Calu3 (cell line): ENCODE measurements at regions of chr2 and their contacts with region 1.

Region 1: DNA sequence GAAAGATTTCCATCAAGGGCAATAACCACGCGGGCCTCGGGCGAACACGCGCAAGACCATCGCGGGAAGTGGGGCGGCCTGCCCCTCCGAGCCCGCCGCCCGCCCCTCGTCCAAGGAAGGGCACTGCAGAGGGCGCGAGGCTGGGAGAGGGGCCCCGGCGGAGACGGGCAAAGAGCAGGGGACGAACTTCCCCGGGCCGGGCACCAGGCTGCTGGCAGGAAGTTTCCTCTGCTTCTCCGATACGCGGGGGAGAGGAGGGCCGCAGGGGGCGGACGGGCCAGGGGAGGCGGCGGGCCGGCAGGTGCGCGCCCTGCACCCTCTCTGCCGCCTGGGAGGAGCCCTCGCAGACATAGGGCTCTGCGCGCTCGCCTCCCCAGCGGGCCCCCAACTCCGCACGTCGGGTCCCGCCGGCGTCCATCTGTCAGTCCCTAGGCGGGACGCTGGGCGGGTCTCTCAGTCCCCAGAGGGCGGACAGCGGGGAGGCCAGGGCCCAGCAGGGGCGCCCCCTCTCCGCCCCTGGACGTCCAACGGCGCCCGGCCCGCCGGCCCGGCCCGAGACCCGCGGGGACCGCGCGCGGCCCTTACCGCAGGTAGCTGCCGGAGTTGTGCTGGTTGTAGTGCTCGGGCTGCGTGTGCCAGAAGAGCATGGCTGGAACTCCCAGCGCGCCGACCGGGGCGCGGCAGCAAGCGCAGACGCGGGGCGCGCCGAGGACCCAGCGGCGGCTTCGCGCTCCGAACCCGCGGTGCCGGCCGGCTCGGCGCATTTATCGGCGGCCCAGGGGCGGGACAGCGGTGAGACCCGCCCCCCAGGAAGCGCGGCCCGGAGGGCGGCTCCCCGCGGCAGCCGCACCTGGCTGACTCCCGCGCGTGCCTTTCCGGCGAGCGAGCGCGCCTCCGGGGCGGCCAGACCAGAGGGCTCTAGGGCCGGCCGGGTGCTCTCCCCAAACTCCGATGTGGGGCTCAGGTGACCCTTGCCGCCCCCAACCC is at the start of gene TFCP2L1:
- DNase-seq: peak; percentile 86
- H3K4me3 Mint-ChIP-seq: peak within 1 kb of the TSS; percentile 88
- H3K27ac Mint-ChIP-seq: peak within 1 kb of the TSS; percentile 77
- H3K4me1 Mint-ChIP-seq: peaks cover 37% of the 10 kb centered on the region
- H3K27me3 Mint-ChIP-seq: no peaks in the 10 kb centered on the region
- CTCF ChIP-seq: no peak
- total RNA-seq, gene TFCP2L1: 21.1 and 29.8 TPM in 2 replicates

Region 2: DNA sequence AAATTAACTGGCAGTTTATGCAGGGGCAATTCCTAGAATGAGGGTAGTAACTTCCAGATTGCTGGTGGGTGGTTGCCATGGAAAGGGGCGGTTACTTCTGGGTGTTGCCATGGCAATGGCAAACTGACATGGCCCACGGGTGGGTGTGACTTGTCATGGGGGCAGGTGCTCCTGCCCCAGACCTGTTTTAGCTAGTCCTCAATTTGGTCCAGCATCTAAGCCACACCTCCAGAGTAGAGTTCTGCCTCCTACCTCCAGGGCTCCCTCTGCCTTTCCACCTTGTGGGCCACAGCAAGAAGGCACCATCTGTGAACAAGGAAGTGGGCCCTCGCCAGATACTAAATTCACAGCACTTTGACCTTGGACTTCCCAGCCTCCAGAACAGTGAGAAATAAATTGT is 148.4 kb before region 1 on chr2:
- CTCF ChIA-PET with region 1: no interaction called
- intact Hi-C with region 1: loop called (anchors 10 kb)
- DNase-seq: peak; percentile 29
- H3K4me3 Mint-ChIP-seq: no peak overlapping the region
- H3K27ac Mint-ChIP-seq: no peak overlapping the region
- H3K4me1 Mint-ChIP-seq: peaks cover 19% of the 10 kb centered on the region
- H3K27me3 Mint-ChIP-seq: no peaks in the 10 kb centered on the region
- CTCF ChIP-seq: no peak

Region 3: DNA sequence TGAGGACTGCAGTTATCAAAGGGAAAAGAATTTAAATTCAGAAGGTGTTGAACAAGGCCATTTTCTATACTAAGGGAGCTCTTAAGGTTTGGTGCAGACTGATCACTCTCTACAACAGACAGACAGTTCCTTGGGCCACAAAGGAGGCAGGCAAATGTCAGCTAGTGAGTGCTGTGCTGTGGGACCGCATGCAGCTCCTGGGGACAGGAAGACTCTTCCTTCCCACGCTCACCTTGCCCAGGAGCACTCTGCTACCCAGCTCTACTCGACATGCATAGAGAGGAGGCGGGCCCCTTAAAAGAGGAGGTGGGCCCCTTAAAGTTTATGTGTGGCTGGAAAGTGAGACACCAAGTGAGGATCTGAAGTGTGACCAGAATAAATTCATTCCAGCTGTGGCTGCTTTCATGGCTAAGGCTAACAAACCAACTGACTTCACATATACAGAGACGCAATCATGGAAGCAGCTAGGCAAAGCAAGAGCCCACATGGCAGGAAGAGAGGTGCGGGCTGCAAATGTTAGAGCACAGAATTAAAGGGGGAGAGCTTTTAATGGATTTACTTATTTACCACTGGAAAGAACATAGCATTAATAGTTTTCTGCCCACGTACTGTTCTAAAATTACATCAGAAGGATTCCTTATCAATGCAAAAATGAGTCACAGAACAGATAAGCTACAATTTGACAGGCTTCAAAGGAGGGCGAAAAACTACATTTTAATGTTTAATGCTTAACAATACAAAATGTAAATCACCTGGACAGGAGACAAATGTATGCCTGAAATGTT is 144.6 kb after region 1 on chr2:
- CTCF ChIA-PET with region 1: no interaction called
- intact Hi-C with region 1: no loop called
- DNase-seq: no peak
- H3K4me3 Mint-ChIP-seq: no peak overlapping the region
- H3K27ac Mint-ChIP-seq: no peak overlapping the region
- H3K4me1 Mint-ChIP-seq: no peaks in the 10 kb centered on the region
- H3K27me3 Mint-ChIP-seq: no peaks in the 10 kb centered on the region
- CTCF ChIP-seq: no peak